Endothelial cell of umbilical vein (primary cell): ENCODE measurements at regions of chr14 and their contacts with region 1.

Region 1: DNA sequence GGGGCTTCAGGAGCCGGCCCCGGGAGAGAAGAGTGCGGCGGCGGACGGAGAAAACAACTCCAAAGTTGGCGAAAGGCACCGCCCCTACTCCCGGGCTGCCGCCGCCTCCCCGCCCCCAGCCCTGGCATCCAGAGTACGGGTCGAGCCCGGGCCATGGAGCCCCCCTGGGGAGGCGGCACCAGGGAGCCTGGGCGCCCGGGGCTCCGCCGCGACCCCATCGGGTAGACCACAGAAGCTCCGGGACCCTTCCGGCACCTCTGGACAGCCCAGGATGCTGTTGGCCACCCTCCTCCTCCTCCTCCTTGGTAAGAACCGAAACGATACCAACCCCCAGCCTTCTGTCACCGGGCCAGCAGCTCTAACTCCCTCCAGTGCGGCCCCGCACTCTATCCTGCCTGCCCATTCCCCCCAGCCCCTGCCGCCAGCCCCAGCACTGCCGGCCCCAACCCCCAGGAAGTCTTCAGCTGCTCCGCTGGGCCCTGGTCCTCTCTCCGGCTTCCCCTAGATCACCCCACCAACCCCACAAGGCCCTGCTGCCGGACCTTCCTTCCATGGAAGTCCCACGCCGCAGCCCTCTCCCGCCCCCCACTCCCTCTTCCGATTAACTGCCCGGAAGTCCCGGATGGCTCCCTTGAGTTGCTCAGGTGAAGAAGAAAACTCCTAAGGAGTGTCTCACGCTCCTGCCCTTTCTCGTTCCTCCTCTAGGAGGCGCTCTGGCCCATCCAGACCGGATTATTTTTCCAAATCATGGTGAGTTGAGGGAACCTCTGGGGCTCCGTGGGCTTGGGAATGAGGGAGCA is 693 bp downstream of the LRP10 start:
- DNase-seq: peak; percentile 87
- H3K4me3 ChIP-seq: peak overlapping the region; percentile 68 to 78 (median 76)
- H3K27ac ChIP-seq: peak overlapping the region; percentile 89
- H3K4me1 ChIP-seq: peaks cover 18% of the 10 kb centered on the region
- H3K27me3 ChIP-seq: no peaks in the 10 kb centered on the region
- CTCF ChIP-seq: peak; percentile 90 to 97
- POLR2A ChIP-seq: peak; percentile 59

Region 2: DNA sequence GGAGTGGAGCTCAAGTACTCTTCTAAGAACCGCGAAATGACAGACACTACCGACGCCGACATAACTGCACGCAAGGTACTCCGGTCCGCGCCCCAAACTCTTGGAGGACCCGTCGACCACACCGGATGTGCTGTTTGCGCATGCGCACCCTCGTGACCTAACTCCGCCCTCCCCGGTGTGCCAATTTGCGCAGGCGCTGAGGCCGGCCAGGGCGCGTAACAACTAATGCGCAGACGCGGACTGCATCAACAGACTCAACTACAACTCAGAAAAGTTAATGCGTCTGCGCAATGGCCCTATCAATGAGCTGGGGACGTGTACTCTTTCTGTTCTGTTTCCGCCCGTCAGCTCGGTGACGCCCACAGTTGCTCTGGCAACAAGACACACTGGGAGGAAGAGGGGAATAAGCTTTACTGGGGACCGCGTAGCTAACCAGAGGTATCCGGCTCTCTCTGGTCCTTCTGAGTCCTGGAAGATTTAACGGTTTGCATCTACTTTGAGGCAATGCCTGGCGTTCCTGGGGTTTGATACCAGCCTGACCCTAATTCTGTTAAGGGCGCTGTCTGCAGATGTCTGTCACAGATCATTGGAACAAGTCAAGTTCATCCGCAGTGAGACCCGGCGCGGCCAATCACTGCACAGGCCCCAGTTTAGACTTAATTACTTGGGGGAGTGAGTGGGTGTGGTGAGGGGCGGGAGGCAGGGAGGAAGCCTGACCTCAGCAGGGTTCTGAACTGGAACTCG is 283.0 kb before region 1 on chr14 and contains the start of gene DAD1:
- CTCF ChIA-PET with region 1: interaction called, 3 read pairs
- POLR2A ChIA-PET with region 1: no interaction called
- dilution Hi-C with region 1: no loop called
- intact Hi-C with region 1: loop called (anchors 1 kb)
- DNase-seq: peak; percentile 100
- H3K4me3 ChIP-seq: peak within 1 kb of the TSS; percentile 70 to 99 (median 92)
- H3K27ac ChIP-seq: peak within 1 kb of the TSS; percentile 84
- H3K4me1 ChIP-seq: peaks cover 23% of the 10 kb centered on the region
- H3K27me3 ChIP-seq: peaks cover 3 to 4% of the 10 kb centered on the region in 2 experiments
- CTCF ChIP-seq: no peak
- POLR2A ChIP-seq: peak; percentile 98
- total RNA-seq, gene DAD1: 299 and 304 TPM in 2 replicates

Region 3: DNA sequence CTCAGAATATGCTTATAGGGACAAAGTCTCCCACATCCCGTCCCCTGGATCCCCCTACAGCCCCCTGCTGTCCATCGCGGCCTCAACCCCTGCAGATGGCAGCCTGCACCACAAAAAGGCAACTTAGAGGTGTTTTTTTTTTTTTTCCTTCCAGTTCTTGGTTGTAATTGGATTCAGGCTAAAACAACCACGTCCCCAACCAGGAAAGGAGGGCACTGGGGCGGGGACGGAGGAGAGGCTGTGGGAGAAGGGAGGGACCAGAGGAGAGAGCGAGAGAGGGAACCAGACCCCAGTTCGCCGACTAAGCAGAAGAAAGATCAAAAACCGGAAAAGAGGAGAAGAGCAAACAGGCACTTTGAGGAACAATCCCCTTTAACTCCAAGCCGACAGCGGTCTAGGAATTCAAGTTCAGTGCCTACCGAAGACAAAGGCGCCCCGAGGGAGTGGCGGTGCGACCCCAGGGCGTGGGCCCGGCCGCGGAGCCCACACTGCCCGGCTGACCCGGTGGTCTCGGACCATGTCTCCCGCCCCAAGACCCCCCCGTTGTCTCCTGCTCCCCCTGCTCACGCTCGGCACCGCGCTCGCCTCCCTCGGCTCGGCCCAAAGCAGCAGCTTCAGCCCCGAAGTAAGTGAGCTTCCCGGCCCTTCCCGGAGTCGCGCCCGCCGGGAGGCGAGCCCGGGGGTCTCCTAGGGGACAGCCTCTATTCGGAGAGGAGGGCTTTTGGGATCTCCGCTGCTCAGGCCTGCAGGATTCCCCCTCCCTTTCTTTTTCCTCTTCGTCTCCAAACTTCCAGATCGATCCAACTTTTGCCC is 35.7 kb before region 1 on chr14 and contains the start of gene MMP14:
- CTCF ChIA-PET with region 1: interaction called, 13 read pairs
- POLR2A ChIA-PET with region 1: no interaction called
- dilution Hi-C with region 1: no loop called
- intact Hi-C with region 1: no loop called
- DNase-seq: peak; percentile 92
- H3K4me3 ChIP-seq: peak within 1 kb of the TSS; percentile 75 to 94 (median 86)
- H3K27ac ChIP-seq: peak within 1 kb of the TSS; percentile 84
- H3K4me1 ChIP-seq: peaks cover 32% of the 10 kb centered on the region
- H3K27me3 ChIP-seq: no peaks in the 10 kb centered on the region
- CTCF ChIP-seq: peak; percentile 26 to 54
- POLR2A ChIP-seq: peak; percentile 95
- total RNA-seq, gene MMP14: 603 and 615 TPM in 2 replicates

Region 4: DNA sequence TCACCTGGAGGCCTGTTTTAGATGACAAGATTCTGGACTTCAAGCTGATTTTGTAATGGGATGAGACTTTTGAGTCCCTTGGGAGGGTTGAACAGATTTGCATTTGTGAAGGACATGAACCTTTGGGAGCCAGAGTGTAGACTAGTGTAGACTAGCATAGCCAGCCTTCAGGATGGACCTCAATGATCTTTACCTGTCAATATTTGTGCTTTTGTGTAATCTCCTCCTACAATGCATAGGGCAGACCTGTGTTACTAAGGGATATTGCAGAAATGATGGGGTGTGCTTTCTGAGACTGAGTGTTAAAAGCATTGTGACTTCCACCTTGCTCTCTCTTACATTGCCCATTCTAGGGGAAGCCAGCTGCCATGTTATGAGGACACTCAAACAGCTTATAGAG is 10.6 kb before region 1 on chr14:
- CTCF ChIA-PET with region 1: interaction called, 19 read pairs
- POLR2A ChIA-PET with region 1: no interaction called
- dilution Hi-C with region 1: no loop called
- intact Hi-C with region 1: no loop called
- DNase-seq: no peak
- H3K4me3 ChIP-seq: no peak overlapping the region
- H3K27ac ChIP-seq: no peak overlapping the region
- H3K4me1 ChIP-seq: no peaks in the 10 kb centered on the region
- H3K27me3 ChIP-seq: no peaks in the 10 kb centered on the region
- CTCF ChIP-seq: no peak
- POLR2A ChIP-seq: no peak

Region 5: DNA sequence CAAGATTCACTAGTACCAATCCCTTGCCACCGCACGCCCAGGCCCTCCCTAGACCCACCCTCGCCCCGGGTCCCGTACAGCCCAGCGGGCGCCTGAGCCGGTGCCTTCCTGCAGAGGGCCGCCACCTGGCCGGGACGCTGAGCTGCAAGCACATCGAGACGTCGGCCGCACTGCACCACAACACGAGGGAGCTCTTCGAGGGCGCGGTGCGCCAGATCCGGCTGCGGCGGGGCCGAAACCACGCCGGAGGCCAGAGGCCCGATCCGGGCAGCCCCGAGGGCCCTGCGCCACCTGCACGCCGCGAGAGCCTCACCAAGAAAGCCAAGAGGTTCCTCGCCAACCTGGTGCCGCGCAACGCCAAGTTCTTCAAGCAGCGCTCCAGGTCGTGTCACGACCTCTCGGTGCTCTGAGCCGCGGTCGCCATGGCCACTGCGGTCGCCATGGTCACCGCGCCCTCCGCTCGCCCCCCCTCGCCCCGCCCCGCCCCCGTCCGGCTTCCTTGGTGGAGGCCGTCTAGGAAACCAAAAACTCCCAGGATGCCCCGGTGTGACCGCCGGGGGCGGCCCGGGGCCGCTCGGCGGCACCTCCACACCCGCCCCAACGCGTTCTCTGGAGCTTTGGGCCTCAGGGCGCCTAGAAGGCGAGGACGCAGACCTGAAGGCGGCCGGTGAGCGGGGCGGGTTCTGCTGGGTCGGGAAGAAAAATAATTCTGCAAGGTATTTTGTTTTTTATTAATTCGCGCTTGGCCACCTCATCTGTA is 14.4 kb after region 1 on chr14:
- CTCF ChIA-PET with region 1: interaction called, 23 read pairs
- POLR2A ChIA-PET with region 1: interaction called, 3 read pairs
- dilution Hi-C with region 1: no loop called
- intact Hi-C with region 1: loop called (anchors 1 kb)
- DNase-seq: peak; percentile 24
- H3K4me3 ChIP-seq: peak overlapping the region in 2 of 3 experiments; percentile 26 to 32
- H3K27ac ChIP-seq: no peak overlapping the region
- H3K4me1 ChIP-seq: no peaks in the 10 kb centered on the region
- H3K27me3 ChIP-seq: no peaks in the 10 kb centered on the region
- CTCF ChIP-seq: peak; percentile 6 to 37
- POLR2A ChIP-seq: no peak

Region 6: GRCh38 chr14:22900081-22900799 is 28.0 kb after region 1 on chr14:
- CTCF ChIA-PET with region 1: interaction called, 75 read pairs
- POLR2A ChIA-PET with region 1: no interaction called
- dilution Hi-C with region 1: no loop called
- intact Hi-C with region 1: loop called (anchors 1 kb)
- DNase-seq: peak; percentile 70
- H3K4me3 ChIP-seq: no peak overlapping the region
- H3K27ac ChIP-seq: no peak overlapping the region
- H3K4me1 ChIP-seq: no peaks in the 10 kb centered on the region
- H3K27me3 ChIP-seq: no peaks in the 10 kb centered on the region
- CTCF ChIP-seq: peak; percentile 38 to 65
- POLR2A ChIP-seq: no peak